OCI-LY7 (cell line): ENCODE measurements at regions of chr11 and their contacts with region 1.

Region 1: GRCh38 chr11:45079943-45080719 is 66.3 kb upstream of the PRDM11 start:
- DNase-seq: peak; percentile 94
- H3K4me3 ChIP-seq: peak overlapping the region; percentile 40
- H3K27ac ChIP-seq: peak overlapping the region; percentile 84
- H3K4me1 ChIP-seq: peaks cover 73% of the 10 kb centered on the region
- CTCF ChIP-seq: peak; percentile 53

Region 2: GRCh38 chr11:44565211-44565952 is 514.7 kb before region 1 on chr11 and contains the start of gene CD82:
- CTCF ChIA-PET with region 1: no interaction called
- POLR2A ChIA-PET with region 1: interaction called, 3 read pairs
- intact Hi-C with region 1: loop called (anchors 10 kb)
- DNase-seq: peak; percentile 97
- H3K4me3 ChIP-seq: peak within 1 kb of the TSS; percentile 70
- H3K27ac ChIP-seq: no peak within 1 kb of the TSS
- H3K4me1 ChIP-seq: peaks cover 36% of the 10 kb centered on the region
- CTCF ChIP-seq: peak; percentile 41
- total RNA-seq, gene CD82: 1.2 and 1.8 TPM in 2 replicates

Region 3: DNA sequence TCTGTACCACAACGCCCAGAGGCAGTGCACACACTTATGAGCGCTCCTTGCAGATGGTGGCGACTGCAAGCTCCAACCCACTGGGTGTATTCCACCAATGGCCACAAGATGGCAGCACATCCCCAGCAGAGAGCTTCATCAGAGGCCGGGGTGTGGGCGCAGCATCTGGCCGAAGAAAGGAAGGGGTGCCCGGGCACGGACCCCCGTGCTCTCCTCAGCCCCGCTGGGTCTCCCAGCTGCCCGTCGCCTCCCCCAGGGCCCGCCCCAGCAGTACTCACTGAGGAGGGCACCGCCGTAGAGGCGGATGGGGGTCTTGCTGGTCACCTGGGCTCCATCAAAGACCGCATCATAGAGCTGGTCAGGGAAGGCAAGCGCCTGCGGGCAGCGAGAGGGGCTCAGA is 143.6 kb before region 1 on chr11:
- CTCF ChIA-PET with region 1: interaction called, 10 read pairs
- POLR2A ChIA-PET with region 1: no interaction called
- intact Hi-C with region 1: loop called (anchors 1 kb)
- DNase-seq: peak; percentile 80
- H3K4me3 ChIP-seq: no peak overlapping the region
- H3K27ac ChIP-seq: no peak overlapping the region
- H3K4me1 ChIP-seq: no peaks in the 10 kb centered on the region
- CTCF ChIP-seq: peak; percentile 95

Region 4: DNA sequence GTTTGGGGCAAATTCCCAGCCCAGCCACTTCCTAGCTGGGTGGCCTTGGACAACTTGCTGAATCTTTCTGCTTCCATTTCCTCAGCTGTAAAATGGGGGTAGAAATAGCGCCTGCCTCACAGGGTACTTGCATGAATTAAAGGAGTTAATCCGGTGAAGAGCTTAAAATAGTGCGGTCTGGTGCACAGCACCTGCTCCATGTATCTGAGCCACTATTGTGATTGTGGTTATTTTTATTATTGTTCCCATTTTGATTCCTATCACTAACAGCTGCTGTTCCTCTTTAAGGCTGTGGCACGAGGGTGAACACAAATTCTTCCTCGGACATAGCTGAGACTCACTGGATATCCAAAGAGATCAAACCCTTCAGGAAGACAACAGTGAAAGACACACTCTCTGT is 82.6 kb before region 1 on chr11:
- CTCF ChIA-PET with region 1: interaction called, 10 read pairs
- POLR2A ChIA-PET with region 1: interaction called, 3 read pairs
- intact Hi-C with region 1: no loop called
- DNase-seq: no peak
- H3K4me3 ChIP-seq: no peak overlapping the region
- H3K27ac ChIP-seq: no peak overlapping the region
- H3K4me1 ChIP-seq: peaks cover 3% of the 10 kb centered on the region
- CTCF ChIP-seq: no peak

Region 5: DNA sequence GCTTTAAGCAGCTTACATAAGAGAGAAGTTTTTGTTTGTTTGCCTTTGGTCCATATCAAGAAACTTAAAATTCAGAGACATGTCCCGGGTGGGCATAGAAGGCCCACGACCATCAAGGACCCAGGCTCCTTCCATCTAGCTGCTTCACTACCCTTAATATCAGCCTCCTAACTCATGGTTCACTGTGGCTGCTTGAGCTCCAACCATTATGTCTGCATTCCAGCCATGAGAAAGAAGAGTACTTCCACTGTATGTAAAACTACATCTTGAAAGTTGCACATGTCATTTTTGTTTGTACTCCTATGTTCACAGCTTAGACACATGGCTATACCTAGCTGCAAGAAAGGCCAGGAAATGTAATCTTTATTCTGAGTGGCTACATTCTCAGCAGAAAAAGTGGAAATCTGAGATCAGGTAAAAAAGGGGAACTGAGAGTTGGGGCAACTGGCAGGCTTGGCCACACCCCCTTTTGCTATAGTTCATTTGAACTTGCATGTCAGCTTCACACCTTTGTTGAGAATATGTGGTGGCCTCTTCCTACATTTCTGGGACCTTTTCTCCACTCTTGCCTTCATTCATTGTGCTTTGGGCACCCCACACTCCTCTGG is 48.1 kb before region 1 on chr11:
- CTCF ChIA-PET with region 1: interaction called, 6 read pairs
- POLR2A ChIA-PET with region 1: interaction called, 7 read pairs
- intact Hi-C with region 1: loop called (anchors 1 kb)
- DNase-seq: peak; percentile 93
- H3K4me3 ChIP-seq: no peak overlapping the region
- H3K27ac ChIP-seq: peak overlapping the region; percentile 80
- H3K4me1 ChIP-seq: peaks cover 34% of the 10 kb centered on the region
- CTCF ChIP-seq: no peak

Region 6: GRCh38 chr11:45067966-45068365 is 12.2 kb before region 1 on chr11:
- CTCF ChIA-PET with region 1: interaction called, 7 read pairs
- POLR2A ChIA-PET with region 1: interaction called, 25 read pairs
- intact Hi-C with region 1: no loop called
- DNase-seq: peak; percentile 73
- H3K4me3 ChIP-seq: no peak overlapping the region
- H3K27ac ChIP-seq: peak overlapping the region; percentile 47
- H3K4me1 ChIP-seq: peaks cover 52% of the 10 kb centered on the region
- CTCF ChIP-seq: no peak

Region 7: DNA sequence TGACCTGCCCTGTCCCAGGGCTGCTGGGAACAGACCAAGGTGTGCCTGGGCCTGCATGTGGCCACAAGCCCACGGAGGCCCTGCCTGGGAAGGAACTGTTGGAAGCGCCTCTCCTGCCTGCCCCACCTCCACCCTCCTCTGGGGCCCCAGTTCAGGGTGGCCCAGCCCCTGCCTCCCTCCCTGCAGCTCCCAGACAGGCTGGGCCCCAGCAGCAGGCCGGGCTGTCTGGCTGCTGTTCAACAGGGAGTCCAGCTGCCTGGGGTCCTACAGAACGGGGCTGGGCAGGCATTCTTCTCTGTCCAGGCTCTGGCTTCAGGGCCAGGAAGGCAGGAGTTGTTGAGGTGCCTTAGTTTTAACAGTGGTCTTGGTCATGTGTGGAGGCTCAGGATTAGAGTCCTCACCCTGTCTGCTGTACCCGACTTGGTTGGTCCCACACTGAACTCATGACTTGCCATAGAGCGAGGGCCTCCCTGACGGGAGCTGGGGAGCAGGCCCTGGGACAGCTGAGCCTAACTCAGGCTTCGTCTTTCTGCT is 78.1 kb after region 1 on chr11:
- CTCF ChIA-PET with region 1: no interaction called
- POLR2A ChIA-PET with region 1: no interaction called
- intact Hi-C with region 1: no loop called
- DNase-seq: no peak
- H3K4me3 ChIP-seq: no peak overlapping the region
- H3K27ac ChIP-seq: no peak overlapping the region
- H3K4me1 ChIP-seq: no peaks in the 10 kb centered on the region
- CTCF ChIP-seq: no peak